ENCODE measurements at regions of chr3 and their contacts with region 1.

Region 1: GRCh38 chr3:195271116-195271858 is at the start of gene XXYLT1:
- DNase-seq: peak; percentile 94
- ATAC-seq: peak; percentile 96 to 98
- total RNA-seq, gene XXYLT1: 4.2 to 8.8 TPM

Region 2: GRCh38 chr3:195020921-195021320 is 250.4 kb before region 1 on chr3:
- intact Hi-C with region 1: no loop called
- DNase-seq: no peak
- ATAC-seq: peak; percentile 30 to 41

Region 3: DNA sequence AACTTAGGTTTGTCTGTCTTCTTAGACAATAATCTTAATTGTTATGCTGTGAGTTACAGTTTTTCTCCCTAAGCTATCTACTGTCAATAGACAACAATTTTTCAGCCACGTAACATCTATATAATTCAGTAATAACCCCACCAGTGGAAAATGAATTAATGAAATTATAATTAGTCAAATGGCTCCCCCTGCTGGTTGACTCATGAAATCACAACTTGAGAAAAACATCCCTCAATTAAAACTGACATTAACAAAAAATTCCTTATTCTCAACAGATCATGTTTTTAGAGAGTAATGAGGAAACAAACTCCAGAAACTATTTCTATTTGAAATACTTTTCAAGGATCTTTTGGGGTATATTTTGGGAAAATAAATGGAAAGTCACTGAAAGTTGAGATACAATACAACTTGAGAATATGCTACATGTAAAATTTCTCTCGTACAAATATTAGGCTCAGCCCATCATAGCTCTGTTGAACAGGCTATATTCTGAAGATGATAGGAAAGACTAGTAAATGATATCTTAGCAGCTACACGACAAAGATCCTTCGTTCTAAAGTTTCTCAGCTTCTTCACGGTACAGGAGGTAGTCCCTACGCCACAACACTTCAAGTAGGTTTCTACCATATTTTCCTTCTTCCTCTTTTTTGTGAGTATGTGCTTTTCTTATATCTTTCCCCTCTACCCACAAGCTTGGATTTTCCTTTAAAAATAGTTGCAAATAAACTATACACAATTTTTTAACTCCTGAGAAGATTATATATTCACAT is 251.2 kb after region 1 on chr3:
- intact Hi-C with region 1: loop called (anchors 2 to 10 kb)
- DNase-seq: no peak
- ATAC-seq: no peak

Region 4: DNA sequence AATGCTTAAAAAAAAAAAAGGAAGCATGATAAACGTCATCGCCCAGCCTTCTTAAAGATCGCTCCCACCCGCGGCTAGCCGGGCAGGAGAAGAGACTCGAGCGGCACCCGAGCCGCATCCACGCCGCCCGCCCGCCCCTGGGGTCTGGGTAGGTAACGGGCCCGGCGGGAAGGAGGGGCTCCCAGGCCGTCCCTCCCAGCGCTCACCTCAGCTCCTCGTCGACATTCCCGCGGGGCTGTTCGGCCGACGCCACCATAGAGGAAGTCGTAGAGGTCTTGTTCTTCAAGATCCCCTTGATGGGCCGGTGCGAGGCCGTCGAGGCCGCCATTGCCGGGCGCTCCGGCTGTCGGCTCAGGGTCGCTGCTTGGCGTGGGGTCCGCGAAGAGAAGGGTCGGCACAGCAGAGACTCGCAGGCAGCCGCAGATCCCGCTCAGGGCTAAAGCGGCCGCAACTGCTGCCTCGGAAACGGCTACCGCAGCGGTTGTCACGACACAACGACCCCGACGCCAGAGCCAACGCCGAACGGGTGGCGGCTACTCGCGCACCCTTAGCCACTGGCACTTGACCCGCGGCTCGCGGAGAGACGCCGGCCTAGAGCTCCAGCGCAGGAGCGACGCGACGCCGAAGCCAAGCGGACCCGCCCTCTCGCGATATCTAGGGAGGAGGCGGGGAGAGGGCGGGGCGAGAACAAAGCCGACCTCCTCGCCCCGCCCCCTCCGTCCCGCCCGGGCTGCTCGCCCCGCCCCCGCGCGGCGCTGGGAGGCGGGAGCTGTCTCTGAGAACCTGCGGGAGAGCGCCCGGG is 271.6 kb after region 1 on chr3 and contains the start of gene PPP1R2:
- intact Hi-C with region 1: no loop called
- DNase-seq: peak; percentile 93
- ATAC-seq: peak; percentile 95 to 97
- total RNA-seq, gene PPP1R2: 38.8 to 53.4 TPM

Measured in left cardiac atrium (tissue), 4 donors.